Colonic mucosa (tissue), 4 donors: ENCODE measurements at regions of chr4 and their contacts with region 1.

Region 1: GRCh38 chr4:1351854-1352633 is 5.0 kb downstream of the UVSSA start:
- DNase-seq: peak; percentile 89
- H3K4me3 ChIP-seq: no peak overlapping the region
- H3K27ac ChIP-seq: no peak overlapping the region
- H3K4me1 ChIP-seq: peaks cover 5% of the 10 kb centered on the region
- H3K27me3 ChIP-seq: no peaks in the 10 kb centered on the region
- CTCF ChIP-seq: peak; percentile 97

Region 2: GRCh38 chr4:1130316-1131186 is 221.5 kb before region 1 on chr4:
- intact Hi-C with region 1: loop called (anchors 5 kb)
- DNase-seq: peak; percentile 74
- H3K4me3 ChIP-seq: no peak overlapping the region
- H3K27ac ChIP-seq: no peak overlapping the region
- H3K4me1 ChIP-seq: no peaks in the 10 kb centered on the region
- H3K27me3 ChIP-seq: no peaks in the 10 kb centered on the region
- CTCF ChIP-seq: peak; percentile 99

Region 3: GRCh38 chr4:1628892-1629698 is 277.1 kb after region 1 on chr4:
- intact Hi-C with region 1: loop called (anchors 5 kb)
- DNase-seq: peak; percentile 67
- H3K4me3 ChIP-seq: no peak overlapping the region
- H3K27ac ChIP-seq: no peak overlapping the region
- H3K4me1 ChIP-seq: no peaks in the 10 kb centered on the region
- H3K27me3 ChIP-seq: no peaks in the 10 kb centered on the region
- CTCF ChIP-seq: peak; percentile 99

Region 4: GRCh38 chr4:1721004-1721665 is 369.1 kb after region 1 on chr4 and contains the starts of genes TACC3 and TMEM129:
- intact Hi-C with region 1: loop called (anchors 10 kb)
- DNase-seq: peak; percentile 96
- H3K4me3 ChIP-seq: peak within 1 kb of the TSS; percentile 87
- H3K27ac ChIP-seq: peak within 1 kb of the TSS; percentile 98
- H3K4me1 ChIP-seq: peaks cover 20% of the 10 kb centered on the region
- H3K27me3 ChIP-seq: no peaks in the 10 kb centered on the region
- CTCF ChIP-seq: no peak
- total RNA-seq, gene TACC3: 20.6 to 99.7 TPM
- total RNA-seq, gene TMEM129: 37.9 to 53.2 TPM